Activated T-helper 1 cell treated with anti-CD3 and anti-CD28 coated beads, Interleukin-12 subunit alpha, Interleukin-12 subunit beta, Interleukin-2, Interleukin-4 antibody, amounts not matched to agents 30 ng/mL and 10 ng/mL and 1 ng/mL, durations not matched to agents 14 hours and 24 hours and 36 hours (primary cell): ENCODE measurements at regions of chr1 and their contacts with region 1.

Region 1: GRCh38 chr1:180778782-180779398 is 133.8 kb upstream of the KIAA1614 start:
- DNase-seq: no peak
- H3K4me3 Mint-ChIP-seq: no peak overlapping the region
- H3K27ac Mint-ChIP-seq: no peak overlapping the region
- H3K4me1 Mint-ChIP-seq: no peaks in the 10 kb centered on the region
- H3K27me3 Mint-ChIP-seq: no peaks in the 10 kb centered on the region

Region 2: GRCh38 chr1:180863158-180863775 is 84.4 kb after region 1 on chr1:
- intact Hi-C with region 1: loop called (anchors 5 kb)
- DNase-seq: no peak
- H3K4me3 Mint-ChIP-seq: no peak overlapping the region
- H3K27ac Mint-ChIP-seq: no peak overlapping the region
- H3K4me1 Mint-ChIP-seq: no peaks in the 10 kb centered on the region
- H3K27me3 Mint-ChIP-seq: no peaks in the 10 kb centered on the region

Region 3: GRCh38 chr1:181142096-181142958 is 363.4 kb after region 1 on chr1:
- intact Hi-C with region 1: no loop called
- DNase-seq: peak; percentile 81
- H3K4me3 Mint-ChIP-seq: peak overlapping the region; percentile 58
- H3K27ac Mint-ChIP-seq: peak overlapping the region; percentile 84
- H3K4me1 Mint-ChIP-seq: peaks cover 64% of the 10 kb centered on the region
- H3K27me3 Mint-ChIP-seq: peaks cover 18% of the 10 kb centered on the region